AG04450 (cell line): ENCODE measurements at regions of chr21 and their contacts with region 1.

Region 1: GRCh38 chr21:32403201-32403777 is 9.2 kb upstream of the EVA1C start:
- DNase-seq: peak; percentile 55
- H3K4me3 ChIP-seq: no peak overlapping the region
- H3K27ac ChIP-seq: peak overlapping the region; percentile 11
- H3K27me3 ChIP-seq: peaks cover 10% of the 10 kb centered on the region
- CTCF ChIP-seq: peak; percentile 72

Region 2: GRCh38 chr21:31945546-31945945 is 457.7 kb before region 1 on chr21:
- CTCF ChIA-PET with region 1: no interaction called
- POLR2A ChIA-PET with region 1: no interaction called
- DNase-seq: peak; percentile 63
- H3K4me3 ChIP-seq: no peak overlapping the region
- H3K27ac ChIP-seq: peak overlapping the region; percentile 31
- H3K27me3 ChIP-seq: no peaks in the 10 kb centered on the region
- CTCF ChIP-seq: no peak

Region 3: GRCh38 chr21:31991356-31992331 is 411.6 kb before region 1 on chr21:
- CTCF ChIA-PET with region 1: interaction called, 10 read pairs
- POLR2A ChIA-PET with region 1: no interaction called
- DNase-seq: no peak
- H3K4me3 ChIP-seq: no peak overlapping the region
- H3K27ac ChIP-seq: no peak overlapping the region
- H3K27me3 ChIP-seq: no peaks in the 10 kb centered on the region
- CTCF ChIP-seq: no peak

Region 4: DNA sequence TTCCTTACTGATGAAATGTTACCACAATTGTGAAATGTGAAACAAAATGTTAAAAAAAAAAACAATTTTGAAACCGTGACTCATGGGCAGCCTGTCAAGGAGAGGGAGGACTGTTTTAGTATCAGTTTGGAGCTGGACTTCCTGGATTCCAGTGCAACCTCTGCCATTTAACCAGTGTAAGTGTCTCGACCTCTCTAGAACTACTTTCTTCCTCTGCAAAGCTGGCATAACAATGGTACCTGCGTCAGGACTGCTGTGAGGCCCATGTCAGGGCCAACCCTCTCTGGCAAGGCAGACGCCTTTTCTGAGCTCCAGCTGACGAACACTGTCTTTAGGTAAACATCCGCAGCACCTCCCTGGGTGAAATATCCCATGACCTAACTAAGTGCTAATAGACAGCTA is 31.4 kb before region 1 on chr21:
- CTCF ChIA-PET with region 1: interaction called, 10 read pairs
- POLR2A ChIA-PET with region 1: no interaction called
- DNase-seq: peak; percentile 52
- H3K4me3 ChIP-seq: no peak overlapping the region
- H3K27ac ChIP-seq: peak overlapping the region; percentile 89
- H3K27me3 ChIP-seq: no peaks in the 10 kb centered on the region
- CTCF ChIP-seq: no peak

Region 5: GRCh38 chr21:32386195-32386870 is 17.0 kb before region 1 on chr21:
- CTCF ChIA-PET with region 1: interaction called, 12 read pairs
- POLR2A ChIA-PET with region 1: no interaction called
- DNase-seq: no peak
- H3K4me3 ChIP-seq: no peak overlapping the region
- H3K27ac ChIP-seq: no peak overlapping the region
- H3K27me3 ChIP-seq: no peaks in the 10 kb centered on the region
- CTCF ChIP-seq: no peak

Region 6: GRCh38 chr21:32463889-32464300 is 60.6 kb after region 1 on chr21:
- CTCF ChIA-PET with region 1: interaction called, 11 read pairs
- POLR2A ChIA-PET with region 1: no interaction called
- DNase-seq: peak; percentile 72
- H3K4me3 ChIP-seq: no peak overlapping the region
- H3K27ac ChIP-seq: peak overlapping the region; percentile 98
- H3K27me3 ChIP-seq: no peaks in the 10 kb centered on the region
- CTCF ChIP-seq: no peak

Region 7: GRCh38 chr21:32562426-32562825 is 159.1 kb after region 1 on chr21:
- CTCF ChIA-PET with region 1: interaction called, 20 read pairs
- POLR2A ChIA-PET with region 1: no interaction called
- DNase-seq: no peak
- H3K4me3 ChIP-seq: no peak overlapping the region
- H3K27ac ChIP-seq: peak overlapping the region; percentile 33
- H3K27me3 ChIP-seq: no peaks in the 10 kb centered on the region
- CTCF ChIP-seq: peak; percentile 56

Region 8: GRCh38 chr21:32569261-32570230 is 166.3 kb after region 1 on chr21:
- CTCF ChIA-PET with region 1: interaction called, 43 read pairs
- POLR2A ChIA-PET with region 1: no interaction called
- DNase-seq: peak; percentile 53
- H3K4me3 ChIP-seq: peak overlapping the region; percentile 73
- H3K27ac ChIP-seq: peak overlapping the region; percentile 86
- H3K27me3 ChIP-seq: peaks cover 9% of the 10 kb centered on the region
- CTCF ChIP-seq: peak; percentile 89